Transverse colon (tissue), 4 donors: ENCODE measurements at regions of chr15 and their contacts with region 1.

Region 1: DNA sequence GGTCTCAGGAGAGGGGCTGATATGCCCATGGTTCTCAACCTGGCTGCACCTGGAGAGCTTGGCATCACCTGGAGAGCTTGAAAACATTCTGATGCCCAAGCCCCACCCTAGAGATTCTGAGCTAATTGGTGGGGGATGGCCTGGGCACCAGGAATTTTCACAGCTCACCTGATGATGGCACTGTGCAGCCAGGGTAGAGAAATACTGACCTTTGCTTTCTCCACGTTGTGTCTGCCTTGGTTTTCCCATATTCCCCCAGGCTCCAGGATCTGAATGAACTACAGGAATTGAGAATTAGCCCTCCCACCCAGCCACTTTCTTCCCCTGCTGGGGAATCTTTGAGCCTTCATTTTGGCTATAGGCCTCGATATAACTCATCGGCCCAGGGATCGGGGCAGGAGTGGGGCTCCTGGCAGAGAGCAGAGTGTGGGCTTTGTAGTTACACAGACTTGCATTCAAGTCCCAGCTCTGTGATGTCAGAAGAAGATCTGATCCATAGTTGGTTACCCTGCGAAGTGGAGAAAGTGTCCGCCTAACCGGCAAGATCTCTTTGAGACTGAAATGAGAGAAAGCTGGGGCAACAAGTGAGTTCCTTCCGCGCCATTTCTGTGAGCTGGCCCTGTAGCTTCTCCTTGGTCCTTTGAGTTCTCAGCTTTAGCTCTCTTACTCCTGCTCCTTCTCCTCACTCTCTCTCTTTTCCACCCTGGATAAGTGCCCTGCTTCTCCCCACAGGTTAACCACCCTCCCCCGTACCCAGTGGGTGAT is 33.1 kb upstream of the UBE2Q2 start:
- DNase-seq: peak; percentile 26
- H3K4me3 ChIP-seq: no peak overlapping the region
- H3K27ac ChIP-seq: no peak overlapping the region
- H3K4me1 ChIP-seq: no peaks in the 10 kb centered on the region
- H3K27me3 ChIP-seq: no peaks in the 10 kb centered on the region
- CTCF ChIP-seq: peak; percentile 19 to 42 (median 32)
- EP300 ChIP-seq: no peak
- POLR2A ChIP-seq: no peak

Region 2: GRCh38 chr15:75884041-75884440 is 73.9 kb after region 1 on chr15:
- in situ Hi-C with region 1: no loop called
- intact Hi-C with region 1: no loop called
- DNase-seq: no peak
- H3K4me3 ChIP-seq: no peak overlapping the region
- H3K27ac ChIP-seq: no peak overlapping the region
- H3K4me1 ChIP-seq: peaks cover 0 to 15% (median 0%) of the 10 kb centered on the region in 4 donors
- H3K27me3 ChIP-seq: no peaks in the 10 kb centered on the region
- CTCF ChIP-seq: no peak
- EP300 ChIP-seq: no peak
- POLR2A ChIP-seq: no peak

Region 3: GRCh38 chr15:75916978-75917377 is 106.8 kb after region 1 on chr15:
- in situ Hi-C with region 1: loop called in 2 of 4 experiments (anchors 10 kb)
- intact Hi-C with region 1: no loop called
- DNase-seq: no peak
- H3K4me3 ChIP-seq: no peak overlapping the region
- H3K27ac ChIP-seq: no peak overlapping the region
- H3K4me1 ChIP-seq: peaks cover 0 to 7% (median 2%) of the 10 kb centered on the region in 4 donors
- H3K27me3 ChIP-seq: no peaks in the 10 kb centered on the region
- CTCF ChIP-seq: no peak
- EP300 ChIP-seq: no peak
- POLR2A ChIP-seq: no peak

Region 4: DNA sequence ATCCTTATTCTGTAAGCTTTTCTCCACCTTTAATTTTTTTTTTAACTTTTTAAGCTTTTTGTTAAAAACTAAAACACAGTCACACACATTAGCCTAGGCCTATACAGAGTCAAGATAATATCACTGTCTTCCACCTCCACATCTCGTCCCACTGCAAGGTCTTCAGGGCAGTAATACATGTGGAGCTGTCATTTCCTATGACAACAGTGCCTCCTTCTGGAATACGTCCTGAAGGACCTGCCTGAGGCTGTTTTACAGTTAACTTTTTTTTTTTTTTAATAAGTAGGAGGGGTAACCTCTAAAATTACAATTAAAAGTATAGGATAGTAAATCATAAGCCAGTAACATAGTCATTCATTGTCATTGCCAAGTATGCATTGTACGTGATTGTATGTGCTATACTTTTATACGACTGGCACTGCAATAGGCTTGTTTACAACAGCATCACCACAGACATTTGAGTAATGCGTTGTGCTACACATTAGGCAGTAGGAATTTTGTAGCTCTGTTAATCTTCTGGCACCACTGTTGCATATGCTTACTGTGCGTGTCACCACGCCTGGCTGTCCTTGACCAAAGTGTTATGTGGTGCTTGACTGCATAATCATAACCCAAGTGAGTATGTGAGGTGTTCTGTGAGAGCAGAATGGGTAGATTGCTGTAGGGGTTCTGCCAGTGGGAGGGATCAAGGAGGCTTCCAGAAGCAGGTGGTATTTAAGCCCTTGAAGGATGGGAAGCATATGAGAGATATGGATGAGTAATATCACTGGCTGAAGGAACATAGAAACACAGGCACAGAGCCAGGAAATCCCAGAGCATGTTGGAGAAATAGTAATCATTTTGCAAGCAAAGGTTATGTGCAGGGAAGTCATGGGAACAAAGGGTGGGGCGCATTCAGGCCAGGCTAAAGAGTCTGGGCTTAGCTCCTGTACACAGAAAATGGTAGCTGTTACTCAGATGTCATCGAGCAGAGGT is 111.8 kb after region 1 on chr15:
- in situ Hi-C with region 1: loop called in 2 of 4 experiments (anchors 10 kb)
- intact Hi-C with region 1: no loop called
- DNase-seq: peak; percentile 65
- H3K4me3 ChIP-seq: no peak overlapping the region
- H3K27ac ChIP-seq: peak overlapping the region; percentile 47 to 67 (median 52)
- H3K4me1 ChIP-seq: peaks cover 0 to 22% (median 9%) of the 10 kb centered on the region in 4 donors
- H3K27me3 ChIP-seq: no peaks in the 10 kb centered on the region
- CTCF ChIP-seq: peak; percentile 24 to 66 (median 48)
- EP300 ChIP-seq: no peak
- POLR2A ChIP-seq: no peak